ENCODE measurements at regions of chr4 and their contacts with region 1.

Region 1: GRCh38 chr4:148380291-148380690 is 61.9 kb downstream of the NR3C2 start:
- DNase-seq: no peak
- H3K4me3 ChIP-seq: no peak overlapping the region
- H3K27ac ChIP-seq: no peak overlapping the region
- H3K4me1 ChIP-seq: no peaks in the 10 kb centered on the region
- H3K27me3 ChIP-seq: no peaks in the 10 kb centered on the region
- CTCF ChIP-seq: no peak
- POLR2A ChIP-seq: no peak

Region 2: GRCh38 chr4:147355847-147356246 is 1024.4 kb before region 1 on chr4:
- intact Hi-C with region 1: loop called (anchors 10 kb)
- DNase-seq: no peak
- H3K4me3 ChIP-seq: no peak overlapping the region
- H3K27ac ChIP-seq: no peak overlapping the region
- H3K4me1 ChIP-seq: no peaks in the 10 kb centered on the region
- H3K27me3 ChIP-seq: no peaks in the 10 kb centered on the region
- CTCF ChIP-seq: no peak
- POLR2A ChIP-seq: no peak